ENCODE measurements at regions of chr12 and their contacts with region 1.

Region 1: DNA sequence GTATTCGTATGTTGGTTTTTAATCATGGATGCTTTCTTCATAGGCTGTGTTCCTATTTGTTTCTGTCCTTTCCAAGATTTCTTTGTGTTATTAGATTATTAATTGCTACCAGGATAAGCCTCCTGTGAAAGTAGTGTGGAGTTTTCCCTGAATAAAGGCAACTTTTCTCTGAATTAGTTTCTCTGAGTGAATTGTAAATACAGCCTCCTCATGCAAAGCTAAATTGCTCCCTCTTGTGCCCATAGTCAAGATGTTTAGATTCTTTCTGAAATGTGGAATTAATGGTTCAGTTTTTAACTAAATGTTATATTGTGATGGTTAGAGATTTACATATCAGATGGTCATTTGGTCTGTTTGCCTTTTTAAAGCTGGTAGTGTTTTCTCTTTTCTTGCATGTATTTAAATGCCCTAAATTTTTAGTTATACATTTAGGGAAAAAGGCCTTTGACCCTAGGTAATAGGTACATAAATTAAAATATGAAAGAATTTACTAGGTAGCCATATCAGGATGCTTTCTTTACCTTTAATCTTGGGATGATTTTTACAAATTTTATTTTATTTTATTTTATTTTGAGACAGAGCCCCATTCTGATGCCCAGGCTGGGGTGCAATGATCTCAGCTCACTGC is 8.9 kb downstream of the APAF1 start:
- DNase-seq: no peak
- ATAC-seq: peak in 1 of 4 donors; percentile 59
- H3K4me3 ChIP-seq: no peak overlapping the region
- H3K27ac ChIP-seq: no peak overlapping the region
- H3K4me1 ChIP-seq: no peaks in the 10 kb centered on the region
- H3K27me3 ChIP-seq: no peaks in the 10 kb centered on the region
- CTCF ChIP-seq: peak; percentile 63

Region 2: GRCh38 chr12:98424726-98425401 is 229.1 kb before region 1 on chr12:
- intact Hi-C with region 1: loop called in 1 of 2 experiments (anchors 10 kb)
- DNase-seq: peak in 1 of 2 donors; percentile 56
- ATAC-seq: peak; percentile 57 to 75 (median 62)
- H3K4me3 ChIP-seq: no peak overlapping the region
- H3K27ac ChIP-seq: no peak overlapping the region
- H3K4me1 ChIP-seq: peaks cover 3% of the 10 kb centered on the region
- H3K27me3 ChIP-seq: no peaks in the 10 kb centered on the region
- CTCF ChIP-seq: peak; percentile 66

Region 3: GRCh38 chr12:98561846-98562245 is 92.1 kb before region 1 on chr12:
- intact Hi-C with region 1: loop called (anchors 2 to 5 kb)
- DNase-seq: no peak
- ATAC-seq: no peak
- H3K4me3 ChIP-seq: no peak overlapping the region
- H3K27ac ChIP-seq: no peak overlapping the region
- H3K4me1 ChIP-seq: no peaks in the 10 kb centered on the region
- H3K27me3 ChIP-seq: no peaks in the 10 kb centered on the region
- CTCF ChIP-seq: no peak

Region 4: GRCh38 chr12:98572010-98572409 is 82.0 kb before region 1 on chr12:
- intact Hi-C with region 1: loop called in 1 of 2 experiments (anchors 5 kb)
- DNase-seq: no peak
- ATAC-seq: no peak
- H3K4me3 ChIP-seq: no peak overlapping the region
- H3K27ac ChIP-seq: no peak overlapping the region
- H3K4me1 ChIP-seq: no peaks in the 10 kb centered on the region
- H3K27me3 ChIP-seq: no peaks in the 10 kb centered on the region
- CTCF ChIP-seq: no peak